ENCODE measurements at regions of chr14 and their contacts with region 1.

Region 1: DNA sequence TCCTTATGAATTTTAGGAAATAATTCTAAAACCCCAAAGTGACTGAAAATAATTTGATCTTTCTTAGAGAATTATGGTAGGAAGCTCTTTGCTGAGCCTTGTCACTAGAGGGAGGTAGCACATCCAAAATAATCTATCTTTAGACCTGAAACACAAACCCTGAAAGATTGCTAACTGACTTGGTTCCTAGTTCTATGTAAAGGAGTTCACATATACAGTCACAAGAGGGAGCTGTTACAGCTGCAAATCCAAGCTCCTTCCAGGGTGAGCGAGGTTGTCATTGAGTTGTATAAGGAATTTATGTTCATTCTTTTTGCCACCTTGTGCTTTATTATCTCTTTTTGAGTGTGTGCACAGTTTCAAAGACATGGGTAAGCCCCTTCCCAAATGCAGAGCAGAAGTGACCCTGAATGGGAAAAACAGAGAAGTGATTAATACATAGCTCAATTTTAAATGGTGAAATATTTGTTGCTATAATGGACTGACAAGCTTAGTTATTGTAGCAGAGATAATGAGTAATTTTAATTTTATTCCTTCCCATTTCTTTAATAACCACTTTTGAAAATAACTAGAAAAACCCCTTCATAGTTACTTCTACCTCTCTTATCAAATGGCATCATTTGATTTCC is 387.9 kb downstream of the DAD1 start:
- DNase-seq: peak in 1 of 35 experiments; percentile 60
- ATAC-seq: peak; percentile 27 to 81 (median 66)
- H3K4me3 ChIP-seq: no peak overlapping the region
- H3K4me3 Mint-ChIP-seq: no peak overlapping the region
- H3K27ac ChIP-seq: no peak overlapping the region
- H3K27ac Mint-ChIP-seq: no peak overlapping the region
- H3K4me1 ChIP-seq: no peaks in the 10 kb centered on the region
- H3K4me1 Mint-ChIP-seq: peaks cover 3 to 7% (median 4%) of the 10 kb centered on the region in 3 donors
- H3K27me3 ChIP-seq: no peaks in the 10 kb centered on the region
- H3K27me3 Mint-ChIP-seq: no peaks in the 10 kb centered on the region

Region 2: GRCh38 chr14:21978184-21978998 is 222.7 kb before region 1 on chr14:
- CTCF ChIA-PET with region 1: no interaction called
- POLR2A ChIA-PET with region 1: no interaction called
- DNase-seq: peak in 34 of 35 experiments; percentile 22 to 80 (median 50)
- ATAC-seq: peak; percentile 71 to 81 (median 76)
- H3K4me3 ChIP-seq: peak overlapping the region in 1 of 2 donors; percentile 31
- H3K4me3 Mint-ChIP-seq: peak overlapping the region; percentile 65 to 69 (median 68)
- H3K27ac ChIP-seq: peak overlapping the region; percentile 29
- H3K27ac Mint-ChIP-seq: peak overlapping the region; percentile 78 to 83
- H3K4me1 ChIP-seq: peaks cover 0 to 6% of the 10 kb centered on the region in 2 experiments
- H3K4me1 Mint-ChIP-seq: peaks cover 22 to 31% (median 28%) of the 10 kb centered on the region in 3 donors
- H3K27me3 ChIP-seq: no peaks in the 10 kb centered on the region
- H3K27me3 Mint-ChIP-seq: peaks cover 3 to 7% of the 10 kb centered on the region in 2 donors

Region 3: GRCh38 chr14:22163051-22163450 is 38.0 kb before region 1 on chr14:
- CTCF ChIA-PET with region 1: interaction called in 1 of 2 experiments, 21 read pairs
- POLR2A ChIA-PET with region 1: no interaction called
- DNase-seq: peak in 1 of 35 experiments; percentile 35
- ATAC-seq: peak in 3 of 4 experiments; percentile 27 to 62 (median 59)
- H3K4me3 ChIP-seq: peak overlapping the region in 1 of 2 donors; percentile 24
- H3K4me3 Mint-ChIP-seq: peak overlapping the region; percentile 72 to 82 (median 80)
- H3K27ac ChIP-seq: no peak overlapping the region
- H3K27ac Mint-ChIP-seq: peak overlapping the region; percentile 80 to 91
- H3K4me1 ChIP-seq: no peaks in the 10 kb centered on the region
- H3K4me1 Mint-ChIP-seq: peaks cover 5 to 17% (median 9%) of the 10 kb centered on the region in 3 donors
- H3K27me3 ChIP-seq: no peaks in the 10 kb centered on the region
- H3K27me3 Mint-ChIP-seq: peaks cover 0 to 3% of the 10 kb centered on the region in 2 donors

Region 4: DNA sequence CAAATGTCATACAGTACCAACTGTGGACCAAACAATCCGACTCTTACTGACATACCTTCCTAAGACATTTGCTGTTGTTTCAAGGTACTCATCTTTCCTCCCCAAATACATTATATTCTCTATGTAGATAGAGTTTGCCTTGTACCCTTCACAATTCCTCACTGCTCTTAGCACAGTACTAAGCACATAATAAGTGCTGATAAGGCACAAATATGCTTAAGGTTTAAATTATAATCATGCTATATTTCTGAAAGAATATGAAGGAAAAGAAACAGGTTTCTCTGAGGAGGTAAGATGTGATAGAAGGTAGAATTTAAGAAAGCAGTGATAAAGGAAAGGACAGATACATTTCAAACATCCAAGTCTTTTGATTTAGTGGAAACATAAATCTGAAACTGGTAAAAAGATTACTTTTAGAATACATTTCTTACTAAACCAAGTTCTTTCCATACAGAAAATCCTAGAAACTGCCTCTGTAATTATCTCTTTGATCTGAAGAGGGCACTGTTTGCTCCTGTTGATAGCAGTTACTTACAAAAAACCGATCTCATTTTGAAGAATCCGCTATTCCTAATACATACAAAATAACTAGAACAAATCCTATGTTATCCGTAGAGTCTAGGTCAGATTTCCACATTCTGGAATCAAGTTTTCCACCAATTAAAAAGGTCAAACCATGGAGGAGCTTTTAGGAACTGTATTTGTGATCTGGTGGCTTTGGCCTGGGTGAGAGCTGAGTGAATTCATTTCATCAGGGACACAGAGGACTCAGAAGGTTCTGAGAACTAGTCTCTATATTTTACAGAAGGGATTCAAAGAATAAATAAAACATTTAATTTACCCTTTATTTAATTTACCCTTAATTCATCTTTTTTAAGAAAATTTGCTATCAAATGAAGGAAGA is 76.1 kb after region 1 on chr14:
- CTCF ChIA-PET with region 1: no interaction called
- POLR2A ChIA-PET with region 1: no interaction called
- DNase-seq: peak in 1 of 35 experiments; percentile 19
- ATAC-seq: no peak
- H3K4me3 ChIP-seq: no peak overlapping the region
- H3K4me3 Mint-ChIP-seq: no peak overlapping the region
- H3K27ac ChIP-seq: no peak overlapping the region
- H3K27ac Mint-ChIP-seq: peak overlapping the region in 1 of 2 donors; percentile 39
- H3K4me1 ChIP-seq: no peaks in the 10 kb centered on the region
- H3K4me1 Mint-ChIP-seq: peaks cover 0 to 5% (median 4%) of the 10 kb centered on the region in 3 donors
- H3K27me3 ChIP-seq: no peaks in the 10 kb centered on the region
- H3K27me3 Mint-ChIP-seq: no peaks in the 10 kb centered on the region